ENCODE measurements at regions of chr5 and their contacts with region 1.

Region 1: DNA sequence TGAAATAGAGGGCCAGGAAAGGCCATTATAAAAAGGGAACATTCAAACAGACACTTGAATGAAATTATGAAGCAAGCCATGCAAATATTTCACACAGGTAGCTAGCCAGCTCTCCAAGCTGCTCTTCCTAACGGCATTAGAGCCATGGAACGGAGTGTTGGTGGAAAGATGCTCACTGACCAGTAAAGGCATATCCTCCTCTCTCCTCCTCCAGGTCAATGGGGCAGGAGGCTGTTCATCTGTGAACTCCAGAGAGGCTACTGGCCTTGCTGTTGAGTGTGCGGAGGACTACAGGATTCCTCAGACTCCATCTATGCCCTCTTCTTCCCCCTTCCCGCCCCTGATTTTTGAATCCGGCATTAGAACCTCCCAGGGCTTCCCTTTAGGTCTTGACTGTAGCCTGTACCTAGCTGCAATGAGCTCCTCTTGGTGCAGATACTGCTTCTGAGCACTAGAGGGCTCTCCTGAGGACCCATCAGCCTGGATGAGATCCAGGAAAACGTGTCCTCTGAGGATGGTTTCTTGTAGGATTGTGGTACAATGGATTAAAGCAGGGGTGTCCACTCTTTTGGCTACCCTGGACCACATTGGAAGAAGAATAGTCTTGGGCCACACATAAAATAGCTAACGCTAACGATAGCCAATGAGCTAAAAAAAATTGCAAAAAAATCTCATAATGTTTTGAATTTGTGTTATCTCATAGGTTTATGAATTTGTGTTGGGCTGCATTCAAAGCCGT is 162.2 kb downstream of the SREK1 start:
- DNase-seq: peak; percentile 56 to 64
- H3K4me3 ChIP-seq: no peak overlapping the region
- H3K4me3 Mint-ChIP-seq: no peak overlapping the region
- H3K27ac Mint-ChIP-seq: no peak overlapping the region
- H3K4me1 ChIP-seq: no peaks in the 10 kb centered on the region
- H3K4me1 Mint-ChIP-seq: no peaks in the 10 kb centered on the region
- H3K27me3 ChIP-seq: no peaks in the 10 kb centered on the region
- H3K27me3 Mint-ChIP-seq: peaks cover 14% of the 10 kb centered on the region
- CTCF ChIP-seq: peak; percentile 72 to 93

Region 2: GRCh38 chr5:66239034-66239433 is 67.2 kb before region 1 on chr5:
- CTCF ChIA-PET with region 1: no interaction called
- POLR2A ChIA-PET with region 1: no interaction called
- intact Hi-C with region 1: loop called (anchors 2 kb)
- DNase-seq: peak in 1 of 2 experiments; percentile 28
- H3K4me3 ChIP-seq: no peak overlapping the region
- H3K4me3 Mint-ChIP-seq: no peak overlapping the region
- H3K27ac Mint-ChIP-seq: no peak overlapping the region
- H3K4me1 ChIP-seq: no peaks in the 10 kb centered on the region
- H3K4me1 Mint-ChIP-seq: no peaks in the 10 kb centered on the region
- H3K27me3 ChIP-seq: no peaks in the 10 kb centered on the region; the same call in 1 of the 2 replicates
- H3K27me3 Mint-ChIP-seq: peaks cover 17% of the 10 kb centered on the region
- CTCF ChIP-seq: no peak

Region 3: DNA sequence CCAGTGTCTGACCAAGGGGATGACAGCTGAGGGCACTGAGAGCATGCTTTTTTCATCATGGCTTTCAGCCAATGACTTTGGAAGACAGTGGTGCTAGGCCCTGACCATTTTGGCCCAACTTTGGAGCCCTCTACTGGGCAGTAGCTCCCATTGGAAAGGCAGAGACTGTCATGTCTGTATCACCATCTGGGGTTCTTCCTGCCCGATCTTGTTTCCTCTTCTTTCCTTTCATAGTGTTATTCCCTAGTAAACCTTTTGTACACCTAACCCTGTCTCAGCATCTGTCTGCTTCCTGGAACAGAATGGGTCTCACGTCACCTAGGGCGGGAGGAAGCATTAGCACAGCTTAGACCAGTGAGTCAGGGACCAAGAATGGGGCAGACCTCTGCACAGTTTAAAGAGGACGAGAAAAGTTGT is 192.5 kb after region 1 on chr5:
- CTCF ChIA-PET with region 1: interaction called, 9 read pairs
- POLR2A ChIA-PET with region 1: interaction called, 5 read pairs
- intact Hi-C with region 1: loop called (anchors 2 kb)
- DNase-seq: peak in 1 of 2 experiments; percentile 10
- H3K4me3 ChIP-seq: no peak overlapping the region
- H3K4me3 Mint-ChIP-seq: no peak overlapping the region
- H3K27ac Mint-ChIP-seq: no peak overlapping the region
- H3K4me1 ChIP-seq: no peaks in the 10 kb centered on the region
- H3K4me1 Mint-ChIP-seq: no peaks in the 10 kb centered on the region
- H3K27me3 ChIP-seq: no peaks in the 10 kb centered on the region; the same call in 1 of the 2 replicates
- H3K27me3 Mint-ChIP-seq: peaks cover 7% of the 10 kb centered on the region
- CTCF ChIP-seq: no peak

Region 4: GRCh38 chr5:66742083-66742895 is 436.0 kb after region 1 on chr5:
- CTCF ChIA-PET with region 1: interaction called, 4 read pairs
- POLR2A ChIA-PET with region 1: no interaction called
- intact Hi-C with region 1: loop called (anchors 5 kb)
- DNase-seq: no peak
- H3K4me3 ChIP-seq: no peak overlapping the region
- H3K4me3 Mint-ChIP-seq: no peak overlapping the region
- H3K27ac Mint-ChIP-seq: no peak overlapping the region
- H3K4me1 ChIP-seq: peaks cover 3% of the 10 kb centered on the region; the same call in 1 of the 2 replicates
- H3K4me1 Mint-ChIP-seq: peaks cover 10% of the 10 kb centered on the region
- H3K27me3 ChIP-seq: no peaks in the 10 kb centered on the region; the same call in 1 of the 2 replicates
- H3K27me3 Mint-ChIP-seq: peaks cover 5% of the 10 kb centered on the region
- CTCF ChIP-seq: no peak

Region 5: DNA sequence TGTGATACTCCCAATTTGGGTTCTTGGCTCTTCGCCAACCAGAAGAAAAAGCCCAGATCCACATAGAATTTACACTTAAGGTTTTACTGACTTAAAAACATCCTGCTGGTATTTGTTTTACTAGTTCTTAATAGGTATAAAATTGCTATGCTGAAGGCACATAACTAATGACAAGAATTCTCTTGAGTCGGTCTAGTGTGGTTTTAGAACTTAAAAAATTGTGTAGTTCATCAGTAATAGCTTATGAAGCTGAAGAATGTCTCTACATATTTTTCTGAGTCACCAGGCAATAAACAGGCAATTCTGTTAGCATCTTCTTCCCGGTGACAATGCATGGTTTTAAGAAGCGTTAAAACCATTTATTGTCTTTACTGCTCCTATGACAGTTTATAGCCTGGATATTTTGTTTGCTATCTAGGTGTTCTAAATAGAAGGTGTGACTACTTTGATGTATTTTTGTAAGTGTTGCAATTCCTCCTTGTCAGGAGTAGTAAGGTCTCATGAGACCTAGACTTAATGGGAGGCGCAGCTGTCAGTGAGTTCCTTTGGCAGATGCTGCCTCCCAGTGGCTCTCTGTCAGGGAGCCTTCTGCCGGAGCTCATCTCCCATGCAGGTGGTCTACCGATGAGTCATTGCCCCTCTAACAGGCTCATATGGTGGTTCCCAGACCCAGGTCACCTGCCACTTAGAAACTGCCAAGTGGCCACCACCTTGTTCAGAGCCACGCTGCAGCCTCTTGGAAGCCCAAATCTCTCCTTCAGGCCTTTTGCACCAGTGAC is 463.8 kb after region 1 on chr5:
- CTCF ChIA-PET with region 1: interaction called, 21 read pairs
- POLR2A ChIA-PET with region 1: no interaction called
- intact Hi-C with region 1: loop called (anchors 1 kb)
- DNase-seq: peak; percentile 31 to 35
- H3K4me3 ChIP-seq: no peak overlapping the region
- H3K4me3 Mint-ChIP-seq: no peak overlapping the region
- H3K27ac Mint-ChIP-seq: no peak overlapping the region
- H3K4me1 ChIP-seq: no peaks in the 10 kb centered on the region
- H3K4me1 Mint-ChIP-seq: no peaks in the 10 kb centered on the region
- H3K27me3 ChIP-seq: no peaks in the 10 kb centered on the region
- H3K27me3 Mint-ChIP-seq: peaks cover 12% of the 10 kb centered on the region
- CTCF ChIP-seq: peak; percentile 20 to 58

Measured in Caco-2 (cell line).